Activated CD8-positive, alpha-beta T cell treated with anti-CD3 and anti-CD28 coated beads, Interleukin-2, amount 10 ng/mL, durations not matched to agents 7 days and 5 days (primary cell): ENCODE measurements at regions of chr6 and their contacts with region 1.

Region 1: DNA sequence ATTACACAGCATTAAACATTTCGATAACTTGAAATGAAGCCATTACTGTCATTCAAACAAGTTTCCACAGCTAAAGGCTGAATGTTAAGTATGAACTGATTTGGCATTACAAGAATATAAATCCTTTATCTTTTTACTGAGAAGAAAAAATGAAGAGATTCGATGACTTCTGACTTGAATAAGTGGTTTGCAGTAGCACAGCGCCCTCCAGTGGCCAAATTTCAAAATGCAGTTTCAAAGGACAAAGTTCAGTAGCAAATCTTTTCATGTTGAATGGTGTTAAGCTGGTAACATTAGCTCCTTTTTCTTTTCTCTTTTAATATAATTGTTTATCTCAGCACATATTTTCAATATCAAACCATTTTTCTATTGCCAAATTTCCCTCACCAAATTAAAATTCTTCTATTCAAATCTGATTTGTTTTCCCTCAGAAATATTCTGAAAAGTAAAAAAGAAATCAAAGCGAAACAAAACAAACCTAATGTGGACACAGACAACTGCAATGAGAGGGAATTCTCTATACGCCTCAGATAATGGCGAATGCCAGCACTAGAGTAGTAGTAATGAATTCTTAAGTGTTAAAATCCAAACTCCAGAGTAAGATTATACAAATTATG is 145.7 kb downstream of the BTBD9 start:
- DNase-seq: peak; percentile 86
- ATAC-seq: no peak
- H3K4me3 Mint-ChIP-seq: no peak overlapping the region
- H3K27ac Mint-ChIP-seq: no peak overlapping the region
- H3K4me1 Mint-ChIP-seq: peaks cover 2% of the 10 kb centered on the region
- H3K27me3 Mint-ChIP-seq: no peaks in the 10 kb centered on the region

Region 2: GRCh38 chr6:37705239-37706051 is 788.6 kb before region 1 on chr6:
- CTCF ChIA-PET with region 1: interaction called, 10 read pairs
- POLR2A ChIA-PET with region 1: no interaction called
- DNase-seq: peak; percentile 63
- ATAC-seq: peak; percentile 63
- H3K4me3 Mint-ChIP-seq: peak overlapping the region; percentile 56
- H3K27ac Mint-ChIP-seq: no peak overlapping the region
- H3K4me1 Mint-ChIP-seq: peaks cover 14% of the 10 kb centered on the region
- H3K27me3 Mint-ChIP-seq: peaks cover 11% of the 10 kb centered on the region

Region 3: GRCh38 chr6:38034274-38034914 is 459.6 kb before region 1 on chr6:
- CTCF ChIA-PET with region 1: interaction called, 25 read pairs
- POLR2A ChIA-PET with region 1: no interaction called
- DNase-seq: no peak
- ATAC-seq: no peak
- H3K4me3 Mint-ChIP-seq: no peak overlapping the region
- H3K27ac Mint-ChIP-seq: no peak overlapping the region
- H3K4me1 Mint-ChIP-seq: peaks cover 12% of the 10 kb centered on the region
- H3K27me3 Mint-ChIP-seq: no peaks in the 10 kb centered on the region

Region 4: DNA sequence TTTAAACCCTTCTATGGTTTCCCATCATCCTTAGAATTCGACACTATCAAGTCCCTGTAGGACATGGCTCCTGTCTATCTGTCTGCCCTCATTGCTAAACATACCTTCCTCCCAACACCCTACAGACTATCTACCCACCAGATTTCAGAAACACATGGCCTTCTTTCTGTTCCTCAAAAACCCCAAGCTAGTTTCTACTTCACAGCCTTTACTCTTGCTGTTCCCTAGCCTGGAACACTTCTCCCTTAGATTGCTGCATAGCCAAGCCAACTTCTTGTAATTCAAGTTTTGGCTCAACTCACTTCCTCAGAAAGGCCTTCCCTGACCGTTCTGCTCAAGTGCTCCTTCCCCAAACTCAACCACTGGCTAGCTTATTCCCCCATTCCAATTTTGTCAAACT is 10.5 kb before region 1 on chr6:
- CTCF ChIA-PET with region 1: interaction called, 36 read pairs
- POLR2A ChIA-PET with region 1: no interaction called
- DNase-seq: no peak
- ATAC-seq: no peak
- H3K4me3 Mint-ChIP-seq: no peak overlapping the region
- H3K27ac Mint-ChIP-seq: no peak overlapping the region
- H3K4me1 Mint-ChIP-seq: no peaks in the 10 kb centered on the region
- H3K27me3 Mint-ChIP-seq: no peaks in the 10 kb centered on the region

Region 5: DNA sequence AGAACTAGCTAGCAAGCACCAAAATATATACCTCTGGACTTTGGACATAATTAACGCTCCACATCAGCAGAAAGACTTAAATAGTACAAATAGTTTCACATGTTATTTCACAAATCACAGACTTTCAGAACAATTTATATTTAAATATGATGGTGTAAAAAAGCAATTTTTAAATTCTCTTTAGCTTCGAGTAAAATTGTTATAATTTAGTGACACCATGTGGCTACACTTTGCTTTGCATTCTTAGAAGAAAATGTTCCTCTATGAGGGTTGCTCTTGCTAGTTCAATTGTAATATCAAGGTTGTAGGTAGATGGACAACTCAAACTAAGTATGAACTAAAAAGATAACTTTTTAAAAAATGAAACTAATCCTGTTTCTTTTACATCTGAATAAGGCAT is 76.7 kb after region 1 on chr6:
- CTCF ChIA-PET with region 1: interaction called, 20 read pairs
- POLR2A ChIA-PET with region 1: no interaction called
- DNase-seq: no peak
- ATAC-seq: no peak
- H3K4me3 Mint-ChIP-seq: no peak overlapping the region
- H3K27ac Mint-ChIP-seq: no peak overlapping the region
- H3K4me1 Mint-ChIP-seq: peaks cover 18% of the 10 kb centered on the region
- H3K27me3 Mint-ChIP-seq: no peaks in the 10 kb centered on the region